Head of caudate nucleus (tissue), 42 donors: ENCODE measurements at regions of chr4 and their contacts with region 1.

Region 1: DNA sequence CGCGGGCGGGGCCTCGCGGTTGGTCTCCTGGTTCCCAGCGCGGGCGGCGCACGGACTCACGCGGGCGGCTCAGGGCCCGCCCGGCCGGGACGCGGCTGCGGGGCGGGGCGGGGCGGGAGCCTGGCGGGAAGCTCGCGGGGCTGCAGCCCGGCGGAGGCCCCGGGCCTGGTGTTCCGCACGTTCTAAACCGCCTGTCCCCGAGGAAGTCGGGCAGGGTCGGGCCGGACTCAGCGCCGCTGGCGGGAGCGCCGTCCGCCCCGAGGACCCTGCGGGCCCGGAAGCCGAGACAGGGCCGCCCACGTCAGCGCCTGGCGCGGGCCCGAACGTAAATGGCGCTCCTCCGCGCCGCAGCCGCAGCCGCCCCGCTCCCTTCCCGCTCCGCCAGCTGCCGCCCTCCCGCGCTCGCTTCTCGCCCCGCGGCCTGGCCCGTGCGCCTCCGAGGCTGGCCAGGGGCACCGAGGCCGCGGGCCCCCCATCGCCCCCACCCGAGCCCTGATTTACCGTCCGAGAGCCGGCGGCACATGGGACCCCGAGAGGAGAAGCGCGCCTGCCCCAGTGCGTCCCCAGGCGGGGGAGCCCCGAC is 309 bp upstream of the CTBP1 start:
- DNase-seq: peak; percentile 40 to 95 (median 90)

Region 2: DNA sequence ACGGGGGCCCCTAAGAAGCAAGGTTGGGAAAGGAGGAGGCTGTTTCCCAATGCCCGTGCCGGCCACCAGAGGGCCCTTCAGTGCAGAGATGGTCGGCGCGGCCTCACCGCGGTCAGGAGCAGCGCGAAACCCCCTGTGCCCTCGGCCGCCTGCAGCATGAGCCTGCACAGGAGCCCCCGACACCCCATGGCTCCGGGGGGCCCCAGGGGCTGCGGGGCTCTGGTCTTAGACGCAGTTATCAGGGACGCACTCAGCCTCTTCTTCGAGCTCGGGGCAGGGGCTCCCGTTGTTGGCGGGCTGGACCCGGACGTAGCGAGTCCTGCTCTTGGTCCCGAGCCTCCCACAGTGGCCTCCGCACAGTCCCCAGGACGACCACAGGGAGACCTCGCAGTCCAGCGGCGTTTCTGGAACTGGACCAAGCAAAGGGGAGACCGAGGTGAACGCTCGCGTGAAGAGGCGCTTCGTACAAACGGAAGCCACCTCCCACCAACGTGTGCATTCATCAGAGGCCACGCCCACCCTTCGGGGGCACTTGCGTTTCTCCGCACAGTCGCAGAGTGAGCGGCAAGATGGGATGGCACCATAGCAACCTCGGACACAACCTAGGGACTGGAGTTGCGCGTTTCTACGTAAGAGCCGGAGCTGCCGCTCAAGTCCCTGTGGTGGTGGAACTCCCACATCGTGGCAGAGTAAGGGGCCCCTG is 81.8 kb before region 1 on chr4:
- intact Hi-C with region 1: loop called (anchors 10 kb)
- DNase-seq: peak; percentile 58 to 92 (median 82)

Region 3: GRCh38 chr4:1278336-1278670 is 29.1 kb after region 1 on chr4:
- intact Hi-C with region 1: no loop called
- DNase-seq: no peak

Region 4: GRCh38 chr4:1289207-1290164 is 40.2 kb after region 1 on chr4 and contains the start of gene MAEA:
- intact Hi-C with region 1: loop called (anchors 2 kb)
- DNase-seq: peak; percentile 94 to 99 (median 98)